B cell (primary cell): ENCODE measurements at regions of chr2 and their contacts with region 1.

Region 1: DNA sequence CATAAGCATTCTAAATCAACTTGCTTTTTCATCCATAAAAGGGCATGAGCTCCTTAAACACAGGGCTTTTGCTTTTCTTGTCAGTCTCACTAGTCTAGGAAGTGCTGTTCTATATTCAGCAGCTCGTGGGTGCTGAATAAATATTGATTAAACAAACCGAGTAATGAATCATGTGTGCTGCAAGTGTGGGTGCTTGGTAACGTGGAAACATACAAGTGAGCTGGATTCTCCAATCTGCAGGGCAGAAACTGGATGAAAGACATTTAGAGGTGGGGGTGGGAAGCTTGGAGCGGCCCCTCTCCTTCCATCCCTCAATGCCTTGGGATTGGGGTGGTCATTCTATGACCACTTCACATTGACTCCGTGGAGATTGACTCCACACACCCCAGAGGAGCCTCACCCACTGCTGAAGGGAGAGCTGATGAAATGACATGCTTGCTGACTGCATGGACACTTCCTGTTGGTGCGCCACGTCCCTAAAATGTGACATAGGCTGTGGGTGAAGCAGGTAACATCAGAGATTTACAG is 114.6 kb downstream of the DOCK10 start:
- DNase-seq: no peak
- ATAC-seq: no peak
- H3K4me3 ChIP-seq: no peak overlapping the region
- H3K4me3 Mint-ChIP-seq: peak overlapping the region; percentile 4
- H3K27ac ChIP-seq: peak overlapping the region; percentile 38 to 43
- H3K27ac Mint-ChIP-seq: peak overlapping the region; percentile 78
- H3K4me1 ChIP-seq: peaks cover 86 to 87% of the 10 kb centered on the region in 2 donors
- H3K4me1 Mint-ChIP-seq: peaks cover 94% of the 10 kb centered on the region
- H3K27me3 ChIP-seq: no peaks in the 10 kb centered on the region
- H3K27me3 Mint-ChIP-seq: no peaks in the 10 kb centered on the region
- CTCF ChIP-seq: no peak

Region 2: GRCh38 chr2:224946895-224947294 is 19.2 kb after region 1 on chr2:
- CTCF ChIA-PET with region 1: interaction called, 8 read pairs
- POLR2A ChIA-PET with region 1: no interaction called
- intact Hi-C with region 1: loop called (anchors 2 kb)
- DNase-seq: peak; percentile 70
- ATAC-seq: peak; percentile 71
- H3K4me3 ChIP-seq: peak overlapping the region; percentile 44 to 92 (median 71)
- H3K4me3 Mint-ChIP-seq: peak overlapping the region; percentile 88
- H3K27ac ChIP-seq: peak overlapping the region; percentile 75 to 91
- H3K27ac Mint-ChIP-seq: peak overlapping the region; percentile 95
- H3K4me1 ChIP-seq: peaks cover 66 to 76% of the 10 kb centered on the region in 2 donors
- H3K4me1 Mint-ChIP-seq: peaks cover 82% of the 10 kb centered on the region
- H3K27me3 ChIP-seq: no peaks in the 10 kb centered on the region
- H3K27me3 Mint-ChIP-seq: no peaks in the 10 kb centered on the region
- CTCF ChIP-seq: no peak

Region 3: DNA sequence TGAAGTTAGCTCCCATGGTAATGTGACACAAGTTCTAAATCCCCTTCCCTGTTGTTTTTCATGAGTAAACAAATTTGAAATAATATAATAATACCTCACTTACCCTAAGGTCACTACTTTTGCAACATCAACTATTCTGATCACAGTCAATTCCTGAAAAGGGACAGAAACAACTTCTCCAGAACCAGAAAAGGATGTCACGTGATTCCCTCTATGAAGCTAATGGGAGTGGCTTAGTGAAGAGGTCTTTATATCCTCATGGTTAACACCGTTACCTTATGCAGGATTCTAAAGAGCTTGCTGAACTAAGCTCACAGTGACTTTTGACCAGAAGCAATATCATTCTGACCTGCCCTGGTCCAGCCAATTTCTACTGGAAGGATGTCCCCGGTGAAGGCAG is 63.0 kb after region 1 on chr2:
- CTCF ChIA-PET with region 1: interaction called, 16 read pairs
- POLR2A ChIA-PET with region 1: no interaction called
- intact Hi-C with region 1: no loop called
- DNase-seq: no peak
- ATAC-seq: no peak
- H3K4me3 ChIP-seq: no peak overlapping the region
- H3K4me3 Mint-ChIP-seq: no peak overlapping the region
- H3K27ac ChIP-seq: no peak overlapping the region
- H3K27ac Mint-ChIP-seq: no peak overlapping the region
- H3K4me1 ChIP-seq: peaks cover 4 to 11% of the 10 kb centered on the region in 2 donors
- H3K4me1 Mint-ChIP-seq: peaks cover 21% of the 10 kb centered on the region
- H3K27me3 ChIP-seq: no peaks in the 10 kb centered on the region
- H3K27me3 Mint-ChIP-seq: no peaks in the 10 kb centered on the region
- CTCF ChIP-seq: no peak